Activated CD4-positive, alpha-beta T cell treated with anti-CD3 and anti-CD28 coated beads for 36 hours (primary cell): ENCODE measurements at regions of chr2 and their contacts with region 1.

Region 1: DNA sequence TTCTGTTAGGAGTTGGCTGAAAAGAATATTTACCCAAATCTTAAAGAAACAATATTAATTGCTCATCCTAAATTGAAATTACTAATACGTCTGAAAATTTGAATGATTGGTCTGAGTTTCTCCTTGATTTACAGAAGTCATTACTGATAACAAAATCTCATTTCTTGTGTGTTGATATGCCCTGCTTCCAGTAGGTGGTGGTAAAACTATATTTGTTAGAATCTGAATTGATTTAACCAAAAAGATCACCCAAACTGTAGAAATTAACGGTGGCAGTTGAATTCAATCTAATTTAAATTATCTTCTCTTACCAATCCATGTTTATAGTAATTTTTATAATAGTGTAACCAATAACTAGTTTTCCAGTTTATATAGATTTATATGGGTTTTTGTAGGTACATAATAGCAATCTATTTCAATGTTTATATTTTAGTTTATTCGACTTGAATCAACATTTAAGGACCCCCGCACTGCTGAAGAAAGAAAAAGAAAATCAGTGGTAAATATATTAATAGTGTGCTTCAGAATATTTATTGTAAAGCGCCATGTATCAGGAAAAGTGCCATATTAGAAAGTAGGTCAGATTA is 38.3 kb downstream of the PAPOLG start:
- DNase-seq: no peak
- ATAC-seq: peak; percentile 51
- H3K4me3 Mint-ChIP-seq: no peak overlapping the region
- H3K27ac Mint-ChIP-seq: no peak overlapping the region
- H3K4me1 Mint-ChIP-seq: peaks cover 17% of the 10 kb centered on the region
- H3K27me3 Mint-ChIP-seq: no peaks in the 10 kb centered on the region

Region 2: GRCh38 chr2:60775048-60775639 is 19.2 kb before region 1 on chr2:
- CTCF ChIA-PET with region 1: interaction called, 3 read pairs
- POLR2A ChIA-PET with region 1: no interaction called
- intact Hi-C with region 1: loop called in 1 of 2 experiments (anchors 2 kb)
- DNase-seq: no peak
- ATAC-seq: no peak
- H3K4me3 Mint-ChIP-seq: no peak overlapping the region
- H3K27ac Mint-ChIP-seq: no peak overlapping the region
- H3K4me1 Mint-ChIP-seq: no peaks in the 10 kb centered on the region
- H3K27me3 Mint-ChIP-seq: no peaks in the 10 kb centered on the region

Region 3: GRCh38 chr2:60948926-60949579 is 154.7 kb after region 1 on chr2:
- CTCF ChIA-PET with region 1: no interaction called
- POLR2A ChIA-PET with region 1: no interaction called
- intact Hi-C with region 1: no loop called
- DNase-seq: no peak
- ATAC-seq: peak; percentile 66
- H3K4me3 Mint-ChIP-seq: no peak overlapping the region
- H3K27ac Mint-ChIP-seq: no peak overlapping the region
- H3K4me1 Mint-ChIP-seq: peaks cover 15% of the 10 kb centered on the region
- H3K27me3 Mint-ChIP-seq: no peaks in the 10 kb centered on the region

Region 4: GRCh38 chr2:61011678-61012077 is 217.3 kb after region 1 on chr2:
- CTCF ChIA-PET with region 1: no interaction called
- POLR2A ChIA-PET with region 1: no interaction called
- intact Hi-C with region 1: loop called in 1 of 2 experiments (anchors 5 kb)
- DNase-seq: no peak
- ATAC-seq: no peak
- H3K4me3 Mint-ChIP-seq: no peak overlapping the region
- H3K27ac Mint-ChIP-seq: no peak overlapping the region
- H3K4me1 Mint-ChIP-seq: peaks cover 24% of the 10 kb centered on the region
- H3K27me3 Mint-ChIP-seq: no peaks in the 10 kb centered on the region